ENCODE measurements at regions of chr9 and their contacts with region 1.

Region 1: GRCh38 chr9:113842086-113842485 is 34.0 kb upstream of the ZNF618 start:
- DNase-seq: no peak
- ATAC-seq: no peak
- H3K4me3 ChIP-seq: no peak overlapping the region
- H3K27ac ChIP-seq: no peak overlapping the region
- H3K4me1 ChIP-seq: no peaks in the 10 kb centered on the region
- CTCF ChIP-seq: no peak
- EP300 ChIP-seq: no peak
- POLR2A ChIP-seq: no peak
- RAD21 ChIP-seq: no peak

Region 2: DNA sequence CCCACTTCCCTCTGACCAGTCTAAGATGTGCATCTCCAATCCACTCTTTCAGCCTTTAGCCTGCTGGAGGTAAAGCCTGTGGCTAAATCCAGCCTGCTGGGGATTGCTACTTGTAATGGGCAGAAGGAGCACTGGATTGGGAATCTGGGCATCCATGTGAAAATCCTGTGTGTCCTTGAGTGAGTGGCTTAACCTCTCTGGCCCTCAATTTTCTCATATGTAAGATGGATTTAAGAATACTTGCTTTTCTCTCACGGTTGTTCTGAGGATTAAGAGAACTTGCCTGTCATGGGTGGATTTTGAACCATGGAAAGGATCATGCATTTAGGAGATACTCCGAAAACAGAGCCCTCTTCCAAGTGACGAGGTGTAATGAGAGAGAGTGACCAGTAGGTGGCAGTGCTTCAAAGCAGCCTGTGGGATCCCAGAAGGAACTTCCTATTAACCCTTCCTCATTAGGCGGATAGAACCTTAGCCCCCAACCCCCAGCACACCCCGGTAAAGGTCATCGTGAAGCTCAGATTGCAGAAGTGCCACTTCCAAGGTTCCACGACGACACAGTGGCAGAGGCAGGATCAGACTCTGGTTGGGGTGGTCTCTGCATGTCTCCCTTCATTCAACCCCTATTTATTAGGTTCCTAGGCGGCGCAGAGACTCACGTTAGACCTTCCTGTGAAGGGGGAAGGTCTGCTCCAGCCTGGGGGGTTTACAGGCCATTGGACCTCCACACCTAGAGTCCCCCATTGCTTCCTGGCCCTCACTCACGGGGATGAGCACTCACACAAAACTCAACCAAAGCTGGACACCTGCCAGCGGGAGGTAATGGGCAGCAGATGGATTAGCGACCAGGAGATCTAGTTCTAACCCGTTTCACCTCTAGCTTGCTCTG is 34.7 kb before region 1 on chr9:
- CTCF ChIA-PET with region 1: interaction called, 10 read pairs
- POLR2A ChIA-PET with region 1: no interaction called
- DNase-seq: peak; percentile 62 to 84
- ATAC-seq: peak; percentile 65 to 87; a peak in 4 of 6 replicates
- H3K4me3 ChIP-seq: no peak overlapping the region
- H3K27ac ChIP-seq: peak overlapping the region; percentile 32 to 66; a peak in 4 of 6 replicates
- H3K4me1 ChIP-seq: peaks cover 17% of the 10 kb centered on the region; the same call in 2 of the 3 replicates
- CTCF ChIP-seq: peak; percentile 86
- EP300 ChIP-seq: no peak
- POLR2A ChIP-seq: no peak
- RAD21 ChIP-seq: peak; percentile 74 to 81

Region 3: DNA sequence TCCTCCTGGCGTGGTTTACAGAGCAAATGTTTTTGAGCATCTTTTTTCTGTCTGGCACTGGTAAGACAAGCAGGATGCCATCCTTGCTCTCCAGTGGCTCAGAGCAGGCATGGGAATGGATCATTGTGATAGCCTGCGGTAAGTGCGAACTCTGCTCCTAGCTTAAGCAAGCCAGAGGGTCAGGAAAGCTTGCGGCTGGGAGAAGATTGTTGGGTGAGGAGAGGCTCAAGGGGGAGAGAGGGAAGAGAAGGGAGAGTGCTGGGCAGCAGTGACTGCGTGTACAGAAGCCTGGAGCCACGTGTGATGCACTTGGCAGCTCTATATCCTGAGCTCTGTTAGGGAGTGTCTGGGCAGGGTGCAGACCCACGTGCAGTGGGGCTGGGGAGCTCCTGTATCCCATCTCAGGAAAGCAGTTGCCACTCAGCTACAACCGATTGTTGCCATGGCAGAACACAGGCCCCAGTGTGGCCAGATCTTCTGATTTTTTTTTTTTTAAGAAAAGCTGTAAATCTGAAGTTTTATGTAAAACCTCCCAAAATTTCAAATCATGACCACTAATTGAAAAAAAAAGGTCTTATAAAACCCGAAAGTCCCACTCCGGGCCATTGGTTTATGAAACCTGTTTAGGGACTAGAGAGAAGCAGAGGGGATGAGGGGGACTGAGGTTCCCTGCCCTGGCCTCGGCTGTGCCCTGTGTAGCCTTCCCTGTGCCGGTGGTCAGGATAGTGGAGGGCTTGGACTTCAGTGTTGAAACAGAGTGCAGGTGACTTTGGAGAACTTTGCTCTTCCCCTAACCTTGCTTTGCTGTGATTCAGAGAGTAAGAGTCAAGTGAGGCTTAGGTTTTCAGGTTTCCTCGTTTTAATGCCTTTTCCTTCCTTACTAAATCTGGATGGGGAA is 101.3 kb after region 1 on chr9:
- CTCF ChIA-PET with region 1: no interaction called
- POLR2A ChIA-PET with region 1: no interaction called
- DNase-seq: no peak
- ATAC-seq: no peak
- H3K4me3 ChIP-seq: no peak overlapping the region
- H3K27ac ChIP-seq: no peak overlapping the region
- H3K4me1 ChIP-seq: no peaks in the 10 kb centered on the region
- CTCF ChIP-seq: no peak
- EP300 ChIP-seq: no peak
- POLR2A ChIP-seq: no peak
- RAD21 ChIP-seq: no peak

Measured in A549 (cell line).